Right ventricle myocardium inferior (tissue), 1 donor: ENCODE measurements at regions of chr3 and their contacts with region 1.

Region 1: DNA sequence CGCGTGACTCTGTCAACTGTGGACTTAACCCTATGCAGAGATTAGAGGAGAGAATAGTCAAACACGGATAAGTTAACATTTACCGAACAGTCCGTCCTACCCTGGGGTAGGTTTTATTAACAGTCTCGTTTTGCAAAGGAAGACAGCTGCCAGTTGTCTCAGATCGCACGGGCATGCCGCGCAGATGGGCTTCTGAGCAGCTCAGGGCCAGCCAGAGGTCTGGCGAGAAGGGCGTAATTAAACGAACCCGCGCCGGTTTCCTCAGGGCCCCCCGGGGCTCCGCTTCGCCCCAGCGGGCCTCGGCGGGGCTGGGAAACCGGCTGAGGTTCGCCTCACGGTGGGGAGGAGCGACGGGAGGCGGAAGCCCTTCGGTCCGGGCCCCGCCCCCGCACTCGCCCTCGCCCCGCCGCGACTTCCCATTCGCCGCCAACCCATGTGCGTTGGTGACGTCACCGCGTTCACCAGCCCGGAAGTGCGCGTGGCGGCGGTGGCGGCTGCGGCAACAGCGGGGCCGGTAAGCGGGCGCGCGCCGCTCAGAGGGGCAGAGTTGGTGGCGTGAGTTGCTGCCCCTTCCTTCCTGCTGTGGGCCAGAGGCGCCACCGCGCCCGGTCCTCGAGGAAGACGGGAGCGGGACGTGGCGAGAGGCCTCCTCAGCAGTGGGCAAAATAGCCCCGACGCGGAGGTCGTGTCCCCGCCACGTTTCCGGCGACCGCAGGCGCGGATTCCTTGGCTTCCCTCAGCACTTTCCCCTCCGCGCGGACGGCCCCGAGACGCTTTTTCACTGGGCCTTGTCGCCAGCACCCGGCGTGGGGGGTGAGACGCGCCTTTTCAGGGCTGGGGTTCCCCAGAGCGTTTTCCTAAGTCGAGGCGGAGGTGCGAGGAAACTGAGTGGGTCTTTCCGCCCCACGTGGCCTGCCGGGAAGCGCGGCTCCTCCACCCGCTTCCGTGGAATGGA is at the start of gene TRNT1:
- DNase-seq: peak; percentile 99
- ATAC-seq: peak; percentile 99
- total RNA-seq, gene TRNT1: 11.2 TPM

Region 2: GRCh38 chr3:3179407-3180094 is 52.8 kb after region 1 on chr3 and contains the start of gene CRBN:
- intact Hi-C with region 1: loop called (anchors 10 kb)
- DNase-seq: peak; percentile 94
- ATAC-seq: peak; percentile 99
- total RNA-seq, gene CRBN: 46.6 TPM

Region 3: DNA sequence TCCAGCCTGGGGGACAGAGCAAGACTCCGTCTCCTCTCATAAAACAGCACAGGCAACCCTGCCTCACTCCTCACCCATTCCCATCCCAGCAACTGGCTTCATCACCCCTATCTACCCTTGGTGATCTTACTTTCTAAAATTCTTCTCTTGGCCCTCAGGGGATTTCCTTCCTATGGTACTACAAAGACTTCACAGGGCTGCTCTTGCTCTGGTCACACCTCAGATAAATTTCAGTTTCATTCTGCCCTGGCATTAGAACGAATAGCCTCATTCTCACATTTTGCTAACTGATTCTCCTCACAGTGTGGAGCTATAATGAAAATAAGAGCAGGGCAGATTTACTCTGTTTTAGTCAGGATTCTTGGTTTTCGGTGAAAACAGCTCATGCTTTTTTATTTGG is 74.9 kb after region 1 on chr3:
- intact Hi-C with region 1: no loop called
- DNase-seq: no peak
- ATAC-seq: no peak

Region 4: DNA sequence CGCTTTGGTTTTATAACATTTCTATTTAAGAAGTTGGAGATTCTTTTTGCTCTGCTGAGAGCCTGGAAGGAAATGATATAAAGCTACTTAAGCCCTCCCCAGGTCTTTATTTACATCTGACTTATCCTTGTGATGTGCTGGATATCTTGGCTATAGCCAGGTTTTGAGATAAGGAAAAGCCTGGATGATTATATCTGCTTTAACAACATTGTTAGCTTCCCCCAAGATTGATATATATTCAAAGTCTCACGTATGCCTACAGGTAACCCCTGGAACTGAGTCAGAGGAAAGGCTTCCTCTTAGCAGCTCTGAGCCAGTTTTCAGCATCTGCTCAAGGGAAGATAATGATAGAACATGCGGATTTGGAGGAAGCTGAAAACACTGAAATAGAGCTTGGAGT is 114.2 kb after region 1 on chr3:
- intact Hi-C with region 1: no loop called
- DNase-seq: no peak
- ATAC-seq: no peak

Region 5: GRCh38 chr3:3383461-3383860 is 256.7 kb after region 1 on chr3:
- intact Hi-C with region 1: no loop called
- DNase-seq: no peak
- ATAC-seq: no peak